Activated naive CD4-positive, alpha-beta T cell treated with anti-CD3 and anti-CD28 coated beads for 36 hours (primary cell): ENCODE measurements at regions of chr1 and their contacts with region 1.

Region 1: GRCh38 chr1:160795951-160796383 is at the start of gene LY9:
- DNase-seq: peak; percentile 92
- H3K4me3 Mint-ChIP-seq: peak within 1 kb of the TSS; percentile 86
- H3K27ac Mint-ChIP-seq: peak within 1 kb of the TSS; percentile 98
- H3K4me1 Mint-ChIP-seq: peaks cover 50% of the 10 kb centered on the region
- H3K27me3 Mint-ChIP-seq: no peaks in the 10 kb centered on the region
- total RNA-seq, gene LY9: 19.5 to 19.6 TPM

Region 2: DNA sequence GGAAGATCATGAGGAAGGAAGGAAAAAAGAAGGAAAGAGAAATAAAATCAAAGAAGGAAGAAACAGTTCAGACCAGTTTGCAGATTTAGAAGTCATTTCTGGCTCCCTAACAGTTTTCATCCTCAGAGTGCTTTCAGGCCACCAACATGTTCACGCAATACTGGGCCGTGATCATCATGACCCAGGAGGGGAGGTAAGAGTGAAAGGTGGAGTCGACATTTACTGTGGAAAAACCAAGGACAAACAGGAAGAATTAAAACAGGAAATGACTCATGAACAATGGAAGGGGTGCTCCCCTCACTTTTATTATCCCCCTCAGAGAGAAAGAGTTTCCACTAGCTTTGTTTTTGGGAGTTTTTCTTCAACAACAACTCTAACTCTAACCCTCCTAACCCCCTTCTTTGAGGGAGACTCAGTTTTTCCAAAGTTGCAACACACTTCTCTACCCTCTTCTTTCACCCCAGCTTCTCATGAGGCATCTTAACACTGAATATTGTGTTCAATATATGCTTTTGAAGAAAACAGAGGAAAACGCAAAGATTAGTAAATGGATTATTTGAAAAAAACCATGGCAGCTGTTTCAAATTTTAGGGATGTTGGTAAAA is 335.2 kb before region 1 on chr1:
- CTCF ChIA-PET with region 1: no interaction called
- intact Hi-C with region 1: loop called (anchors 5 kb)
- DNase-seq: peak; percentile 66
- H3K4me3 Mint-ChIP-seq: peak overlapping the region; percentile 68
- H3K27ac Mint-ChIP-seq: peak overlapping the region; percentile 99
- H3K4me1 Mint-ChIP-seq: peaks cover 91% of the 10 kb centered on the region
- H3K27me3 Mint-ChIP-seq: no peaks in the 10 kb centered on the region

Region 3: DNA sequence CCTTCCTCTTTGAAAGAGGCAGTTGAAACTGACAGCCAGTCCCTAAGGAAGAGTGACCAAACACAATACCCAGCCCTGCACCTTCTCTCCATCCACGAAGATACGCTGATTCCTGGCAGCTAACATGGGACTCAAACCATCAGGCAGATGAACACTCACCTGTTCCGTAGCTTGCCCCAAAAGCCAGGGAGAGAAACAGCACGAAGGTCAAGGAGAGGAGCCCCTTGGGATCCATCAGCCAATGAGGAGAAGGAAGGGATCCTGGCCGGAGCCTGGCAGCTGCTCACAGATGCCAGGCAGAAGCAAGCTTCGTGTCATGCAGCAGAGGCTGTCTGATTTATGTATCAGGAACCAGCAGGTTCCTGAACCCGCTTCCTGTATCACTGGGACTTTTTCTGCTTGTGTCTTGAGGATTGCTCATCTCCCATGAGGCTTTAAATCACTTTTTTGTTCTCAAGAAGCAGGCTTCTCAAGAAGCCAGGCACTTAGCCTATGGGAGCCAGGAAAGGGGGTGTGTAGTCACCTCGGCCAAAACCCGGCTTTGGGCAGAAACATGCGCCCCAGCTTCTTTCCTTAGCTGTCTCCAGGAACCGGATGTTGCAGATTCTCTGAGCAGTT is 149.1 kb before region 1 on chr1 and contains the start of gene SLAMF1:
- CTCF ChIA-PET with region 1: no interaction called
- intact Hi-C with region 1: no loop called
- DNase-seq: peak; percentile 84
- H3K4me3 Mint-ChIP-seq: peak within 1 kb of the TSS; percentile 99
- H3K27ac Mint-ChIP-seq: peak within 1 kb of the TSS; percentile 99
- H3K4me1 Mint-ChIP-seq: peaks cover 49% of the 10 kb centered on the region
- H3K27me3 Mint-ChIP-seq: no peaks in the 10 kb centered on the region
- total RNA-seq, gene SLAMF1: 101 to 112 TPM

Region 4: DNA sequence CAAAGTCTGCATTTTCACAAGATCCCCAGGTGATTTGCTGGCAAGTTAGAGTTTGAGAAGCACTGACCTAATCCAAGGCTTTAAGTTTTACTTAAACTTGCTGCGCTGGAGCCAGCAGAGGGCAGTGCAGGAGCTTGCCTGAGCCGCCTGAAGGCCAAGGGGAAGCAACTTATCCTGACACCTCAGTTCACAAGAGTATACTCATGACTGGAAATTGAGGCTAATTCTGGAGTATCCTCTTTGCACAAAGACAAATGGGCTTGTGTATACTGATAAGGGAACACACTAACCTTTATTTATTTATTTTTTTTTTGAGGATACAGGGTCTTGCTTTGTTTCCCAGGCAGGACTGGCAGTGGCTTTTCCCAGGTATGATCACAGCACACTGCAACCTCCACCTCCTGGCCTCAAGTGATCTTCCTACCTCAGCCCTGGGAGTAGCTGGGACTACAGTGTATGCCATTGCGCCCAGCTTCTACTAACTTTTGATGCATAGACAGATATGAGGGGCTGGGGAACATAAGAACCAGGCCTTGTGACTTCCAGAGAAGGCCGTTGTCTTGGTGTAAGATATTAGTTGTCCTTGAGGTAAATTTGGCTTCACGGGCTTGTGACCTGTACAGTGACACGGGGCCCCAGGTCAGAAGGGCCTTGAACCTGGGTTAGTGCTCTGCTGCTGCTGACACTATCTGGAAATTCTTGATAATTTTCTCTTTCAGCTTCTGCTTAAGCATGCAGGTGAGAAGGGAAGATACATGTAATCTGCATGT is 120.1 kb before region 1 on chr1:
- CTCF ChIA-PET with region 1: interaction called, 10 read pairs
- intact Hi-C with region 1: loop called (anchors 2 kb)
- DNase-seq: peak; percentile 92
- H3K4me3 Mint-ChIP-seq: no peak overlapping the region
- H3K27ac Mint-ChIP-seq: no peak overlapping the region
- H3K4me1 Mint-ChIP-seq: peaks cover 41% of the 10 kb centered on the region
- H3K27me3 Mint-ChIP-seq: no peaks in the 10 kb centered on the region

Region 5: DNA sequence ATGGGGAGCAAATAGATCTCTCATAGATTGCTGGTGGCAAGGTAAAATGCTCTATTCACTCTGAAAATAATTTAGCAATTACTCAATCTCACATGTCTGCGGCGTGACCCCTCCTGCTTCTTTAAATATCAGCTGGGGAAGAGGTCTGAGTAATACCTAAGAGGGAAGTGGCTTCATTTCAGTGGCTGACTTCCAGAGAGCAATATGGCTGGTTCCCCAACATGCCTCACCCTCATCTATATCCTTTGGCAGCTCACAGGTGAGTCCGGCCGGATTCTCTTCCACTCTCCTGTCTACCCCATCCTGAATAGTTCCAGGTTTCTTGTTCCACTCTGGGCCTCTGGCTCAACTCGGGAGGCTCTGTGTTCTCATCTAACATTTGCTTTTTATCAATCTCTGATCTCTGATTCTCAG is 56.9 kb before region 1 on chr1 and contains the start of gene SLAMF7:
- CTCF ChIA-PET with region 1: interaction called, 6 read pairs
- intact Hi-C with region 1: loop called (anchors 2 kb)
- DNase-seq: peak; percentile 77
- H3K4me3 Mint-ChIP-seq: peak within 1 kb of the TSS; percentile 88
- H3K27ac Mint-ChIP-seq: peak within 1 kb of the TSS; percentile 94
- H3K4me1 Mint-ChIP-seq: peaks cover 87% of the 10 kb centered on the region
- H3K27me3 Mint-ChIP-seq: no peaks in the 10 kb centered on the region
- total RNA-seq, gene SLAMF7: 79.9 to 82.2 TPM

Region 6: GRCh38 chr1:160806109-160806665 is 10.2 kb after region 1 on chr1:
- CTCF ChIA-PET with region 1: interaction called, 26 read pairs
- intact Hi-C with region 1: loop called (anchors 1 kb)
- DNase-seq: no peak
- H3K4me3 Mint-ChIP-seq: peak overlapping the region; percentile 30
- H3K27ac Mint-ChIP-seq: peak overlapping the region; percentile 78
- H3K4me1 Mint-ChIP-seq: peaks cover 77% of the 10 kb centered on the region
- H3K27me3 Mint-ChIP-seq: no peaks in the 10 kb centered on the region

Region 7: GRCh38 chr1:160837558-160838205 is 41.7 kb after region 1 on chr1:
- CTCF ChIA-PET with region 1: interaction called, 60 read pairs
- intact Hi-C with region 1: no loop called
- DNase-seq: peak; percentile 90
- H3K4me3 Mint-ChIP-seq: peak overlapping the region; percentile 16
- H3K27ac Mint-ChIP-seq: peak overlapping the region; percentile 82
- H3K4me1 Mint-ChIP-seq: peaks cover 49% of the 10 kb centered on the region
- H3K27me3 Mint-ChIP-seq: no peaks in the 10 kb centered on the region